Ascending aorta (tissue), 2 donors: ENCODE measurements at regions of chr6 and their contacts with region 1.

Region 1: DNA sequence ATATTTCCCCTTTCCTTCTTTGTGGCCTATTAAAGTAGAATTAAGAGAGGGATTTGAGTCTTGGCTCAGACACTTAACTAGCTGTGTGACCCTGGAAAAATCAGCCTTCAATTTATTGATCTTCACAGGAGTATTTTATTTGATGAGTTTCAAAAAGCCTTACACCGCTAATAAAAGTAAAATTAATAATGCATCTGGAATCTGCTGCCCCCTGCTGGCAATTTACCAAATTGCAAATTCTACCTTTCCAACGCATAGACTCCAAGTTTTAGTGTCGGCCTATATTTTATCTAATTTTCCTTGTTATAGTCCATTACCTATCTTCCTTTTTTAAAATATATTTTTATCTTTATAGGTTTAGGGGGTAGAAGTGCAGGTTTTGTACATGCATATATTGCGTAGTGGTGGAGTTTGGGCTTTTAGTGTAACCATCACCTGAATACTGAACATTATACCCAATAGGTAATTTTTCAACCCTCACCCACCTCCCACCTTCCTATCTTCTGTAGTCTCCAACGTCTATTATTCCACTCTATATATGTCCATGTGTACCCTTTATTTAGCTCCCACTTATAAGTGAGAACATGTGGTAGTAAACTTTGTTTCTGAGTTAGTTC is 46.3 kb downstream of the GOPC start:
- DNase-seq: no peak
- H3K4me3 ChIP-seq: no peak overlapping the region
- H3K27ac ChIP-seq: no peak overlapping the region
- H3K4me1 ChIP-seq: no peaks in the 10 kb centered on the region
- H3K27me3 ChIP-seq: no peaks in the 10 kb centered on the region
- CTCF ChIP-seq: peak; percentile 71 to 85 (median 78)

Region 2: GRCh38 chr6:117346142-117346930 is 209.7 kb before region 1 on chr6:
- intact Hi-C with region 1: loop called (anchors 2 kb)
- DNase-seq: no peak
- H3K4me3 ChIP-seq: peak overlapping the region in 1 of 2 donors; percentile 47
- H3K27ac ChIP-seq: no peak overlapping the region
- H3K4me1 ChIP-seq: no peaks in the 10 kb centered on the region
- H3K27me3 ChIP-seq: no peaks in the 10 kb centered on the region
- CTCF ChIP-seq: peak in 2 of 3 experiments; percentile 49 to 55

Region 3: GRCh38 chr6:117373211-117373813 is 182.7 kb before region 1 on chr6:
- intact Hi-C with region 1: no loop called
- DNase-seq: no peak
- H3K4me3 ChIP-seq: no peak overlapping the region
- H3K27ac ChIP-seq: no peak overlapping the region
- H3K4me1 ChIP-seq: no peaks in the 10 kb centered on the region
- H3K27me3 ChIP-seq: no peaks in the 10 kb centered on the region
- CTCF ChIP-seq: no peak

Region 4: DNA sequence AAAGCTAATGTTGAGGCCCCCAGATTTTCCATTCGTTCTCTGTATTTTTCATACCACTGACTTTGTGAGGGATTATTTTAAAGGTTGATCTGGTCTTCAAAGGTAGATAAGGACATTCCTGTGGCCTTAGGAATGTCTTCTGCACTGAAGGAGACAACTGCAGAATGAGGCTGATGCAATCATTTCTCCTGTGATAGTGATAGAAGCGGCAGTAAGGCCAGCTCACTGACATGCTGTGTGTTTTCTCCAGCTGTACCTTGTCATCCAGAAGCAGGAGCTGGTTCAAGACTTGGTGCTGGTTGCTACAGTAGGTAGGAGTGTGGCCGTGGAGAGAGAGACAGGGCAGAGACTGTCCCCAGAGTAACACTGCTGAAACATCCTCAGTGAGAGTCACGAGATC is 19.7 kb before region 1 on chr6:
- intact Hi-C with region 1: no loop called
- DNase-seq: no peak
- H3K4me3 ChIP-seq: no peak overlapping the region
- H3K27ac ChIP-seq: no peak overlapping the region
- H3K4me1 ChIP-seq: no peaks in the 10 kb centered on the region
- H3K27me3 ChIP-seq: no peaks in the 10 kb centered on the region
- CTCF ChIP-seq: no peak